ENCODE measurements at regions of chr5 and their contacts with region 1.

Region 1: DNA sequence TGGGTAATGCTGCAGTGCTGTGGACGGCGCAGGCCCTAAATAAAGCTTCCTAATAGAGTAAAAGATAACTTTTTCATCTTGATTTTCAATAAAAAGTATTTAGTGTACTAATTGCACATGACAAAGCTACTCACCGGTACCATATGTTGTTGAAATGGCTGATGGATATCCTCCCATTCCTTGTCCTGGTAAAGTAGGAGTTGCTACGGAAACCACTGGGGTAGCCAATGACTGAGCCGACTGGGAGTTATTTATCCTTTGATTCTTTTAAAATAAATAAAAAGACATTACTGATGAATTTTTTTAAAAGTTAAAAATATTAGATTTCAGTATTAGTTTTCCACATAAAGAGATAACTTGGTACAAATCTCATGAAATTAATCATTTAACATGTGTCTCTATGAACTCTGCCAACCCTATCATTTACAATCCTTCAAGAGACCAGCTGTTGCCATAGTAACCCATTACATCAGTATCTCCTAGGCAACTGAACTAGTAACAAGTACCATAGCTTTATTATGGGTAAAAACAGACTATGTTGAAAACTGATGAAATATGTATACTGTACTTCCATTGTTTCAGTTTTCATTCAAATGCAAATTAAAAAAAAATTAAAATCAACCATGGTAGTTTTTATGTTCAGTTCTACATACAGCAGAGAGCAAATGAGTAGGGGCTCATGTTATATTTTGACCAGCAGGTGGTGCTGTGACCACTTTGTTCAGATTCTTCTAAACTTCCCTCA is 153.7 kb downstream of the MEF2C start:
- DNase-seq: no peak
- CTCF ChIP-seq: peak; percentile 63

Region 2: DNA sequence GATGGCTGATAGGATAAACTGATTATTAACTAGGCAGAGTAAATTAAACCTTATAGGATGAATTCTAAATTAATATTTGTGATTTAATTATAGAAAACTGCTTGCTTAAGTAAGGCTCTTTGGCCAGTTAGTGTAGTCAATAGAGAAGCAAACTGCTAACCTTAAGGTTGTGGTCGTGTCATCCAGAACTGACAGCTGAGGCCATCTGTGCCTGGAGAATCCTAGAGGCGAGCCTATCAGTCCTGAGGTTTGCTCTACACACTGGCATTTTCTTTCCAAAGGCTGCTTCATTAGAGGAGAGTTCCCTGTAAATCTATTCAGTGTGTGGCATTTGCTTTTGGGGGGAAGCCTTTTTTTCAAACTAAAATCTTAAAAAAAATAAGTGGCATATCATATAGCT is 15.4 kb before region 1 on chr5:
- CTCF ChIA-PET with region 1: interaction called, 31 read pairs
- POLR2A ChIA-PET with region 1: no interaction called
- DNase-seq: no peak
- CTCF ChIP-seq: no peak

Region 3: GRCh38 chr5:88746438-88746882 is 17.2 kb after region 1 on chr5:
- CTCF ChIA-PET with region 1: interaction called, 22 read pairs
- POLR2A ChIA-PET with region 1: interaction called, 3 read pairs
- DNase-seq: no peak
- CTCF ChIP-seq: no peak

Region 4: DNA sequence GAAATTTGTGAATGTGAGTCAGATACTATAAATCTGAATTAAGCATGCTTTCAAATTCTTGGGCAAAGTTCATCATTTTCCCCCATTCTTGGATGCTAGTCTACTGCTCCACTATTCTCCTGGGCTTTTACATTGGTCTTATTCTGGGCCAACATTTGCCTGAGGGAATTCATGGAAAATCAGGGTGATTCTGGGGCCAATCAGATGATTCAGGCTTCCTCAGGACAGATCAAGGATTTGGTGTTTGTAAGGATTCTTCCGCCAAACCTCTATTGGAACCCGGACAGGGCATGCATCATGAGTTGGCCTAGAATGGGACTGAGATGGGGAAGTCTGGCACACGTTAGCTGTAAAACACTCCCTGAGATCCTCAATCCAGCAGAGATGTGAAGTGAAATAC is 39.9 kb after region 1 on chr5:
- CTCF ChIA-PET with region 1: interaction called, 10 read pairs
- POLR2A ChIA-PET with region 1: no interaction called
- DNase-seq: no peak
- CTCF ChIP-seq: no peak

Region 5: GRCh38 chr5:88819301-88819999 is 90.2 kb after region 1 on chr5:
- CTCF ChIA-PET with region 1: interaction called, 25 read pairs
- POLR2A ChIA-PET with region 1: no interaction called
- DNase-seq: no peak
- CTCF ChIP-seq: no peak

Region 6: DNA sequence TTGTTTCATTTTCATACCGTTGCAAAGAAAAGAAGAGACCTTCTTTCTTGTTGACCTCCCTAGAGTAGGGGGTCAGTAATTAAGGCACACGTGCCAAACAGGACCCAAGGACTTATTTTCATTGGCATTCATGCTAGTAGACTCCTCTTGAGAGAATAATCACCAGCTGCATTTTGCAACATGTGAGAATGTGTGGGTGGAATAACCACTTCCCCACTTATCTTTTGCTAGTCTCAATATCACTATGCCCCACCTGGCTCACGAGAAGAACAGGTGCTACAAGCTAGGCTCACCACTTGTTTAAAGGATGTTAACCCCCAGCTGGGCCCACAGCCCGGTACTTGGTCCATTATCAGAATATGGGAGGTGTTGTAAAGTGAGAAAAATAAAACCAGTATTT is 614.4 kb after region 1 on chr5:
- CTCF ChIA-PET with region 1: interaction called, 13 read pairs
- POLR2A ChIA-PET with region 1: no interaction called
- DNase-seq: peak; percentile 37
- CTCF ChIP-seq: no peak

Region 7: GRCh38 chr5:90264689-90265544 is 1535.7 kb after region 1 on chr5:
- CTCF ChIA-PET with region 1: interaction called, 51 read pairs
- POLR2A ChIA-PET with region 1: no interaction called
- DNase-seq: peak; percentile 13
- CTCF ChIP-seq: peak; percentile 72